ENCODE measurements at regions of chr11 and their contacts with region 1.

Region 1: GRCh38 chr11:65575568-65576231 is at the start of gene EHBP1L1:
- H3K4me3 ChIP-seq: peak within 1 kb of the TSS; percentile 31
- H3K27ac ChIP-seq: no peak within 1 kb of the TSS; the same call in 1 of the 2 replicates
- H3K4me1 ChIP-seq: peaks cover 17% of the 10 kb centered on the region; the same call in 1 of the 2 replicates
- CTCF ChIP-seq: no peak

Region 2: DNA sequence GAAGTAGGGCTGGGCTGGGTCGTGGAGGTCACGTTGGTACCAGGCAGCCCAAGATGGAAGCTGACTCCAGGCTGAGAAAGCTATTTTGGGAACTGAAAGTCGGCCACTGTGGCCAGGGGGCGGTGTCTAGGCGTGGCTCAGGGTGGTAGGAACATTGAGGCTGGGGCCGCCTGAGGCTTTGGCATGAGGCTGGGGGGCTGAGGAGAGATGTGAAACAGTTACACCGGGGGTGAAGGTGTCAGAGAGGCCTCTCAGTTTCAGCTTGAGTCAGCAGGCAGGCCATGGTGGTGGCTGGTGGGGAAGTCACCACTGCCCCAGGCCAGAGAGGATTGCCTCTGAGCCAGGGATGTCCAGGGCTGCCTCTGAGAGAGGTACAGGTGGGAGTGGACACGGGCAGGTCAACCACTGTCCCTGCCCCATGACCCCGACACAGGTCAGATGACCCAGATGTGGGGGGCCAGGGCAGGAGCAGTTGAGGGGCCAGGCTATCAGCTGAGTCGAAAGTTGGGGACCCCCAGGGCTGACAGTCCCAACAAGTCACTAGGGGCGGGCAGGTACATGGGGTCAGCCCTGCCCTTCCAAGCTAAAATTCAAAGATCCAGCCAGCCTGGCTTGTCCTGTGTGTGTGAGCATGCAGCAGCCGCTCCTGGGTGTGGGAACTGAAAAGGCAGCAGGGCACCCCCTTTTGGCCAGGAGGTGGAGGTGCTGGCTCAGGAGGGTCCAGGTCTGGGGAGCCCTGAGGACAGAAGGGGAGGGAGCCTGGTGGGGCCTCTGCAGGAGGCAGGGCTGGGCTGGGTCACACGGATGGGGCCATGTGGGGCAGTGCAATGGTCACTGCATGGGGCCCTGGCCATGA is 12.7 kb after region 1 on chr11:
- CTCF ChIA-PET with region 1: interaction called, 28 read pairs
- POLR2A ChIA-PET with region 1: interaction called, 6 read pairs
- H3K4me3 ChIP-seq: no peak overlapping the region
- H3K27ac ChIP-seq: no peak overlapping the region
- H3K4me1 ChIP-seq: no peaks in the 10 kb centered on the region
- CTCF ChIP-seq: peak; percentile 35; the same call in 1 of the 2 replicates

Region 3: DNA sequence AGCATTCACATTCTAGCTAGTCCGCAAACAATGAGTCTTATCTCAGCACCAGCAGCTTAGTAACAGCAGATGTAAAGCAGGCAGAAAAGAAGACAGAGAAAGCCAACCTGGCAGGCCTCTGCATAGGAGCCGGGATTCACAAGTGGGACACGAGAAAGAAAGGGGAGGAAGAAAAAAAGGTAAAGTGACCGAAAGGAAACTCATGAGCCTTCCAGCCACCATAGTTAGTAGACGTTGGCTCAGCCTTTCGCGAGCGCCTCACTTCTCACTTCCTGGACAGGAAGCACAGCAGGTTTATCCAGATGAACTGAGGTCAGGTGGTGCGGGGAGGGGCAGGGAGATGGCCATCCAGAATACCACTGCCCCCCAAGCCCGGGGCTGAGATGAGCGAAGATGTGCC is 116.7 kb after region 1 on chr11:
- CTCF ChIA-PET with region 1: no interaction called
- POLR2A ChIA-PET with region 1: no interaction called
- H3K4me3 ChIP-seq: no peak overlapping the region
- H3K27ac ChIP-seq: no peak overlapping the region
- H3K4me1 ChIP-seq: no peaks in the 10 kb centered on the region
- CTCF ChIP-seq: no peak

Region 4: GRCh38 chr11:66001942-66002647 is 426.4 kb after region 1 on chr11 and contains the starts of genes BANF1 and EIF1AD:
- CTCF ChIA-PET with region 1: no interaction called
- POLR2A ChIA-PET with region 1: no interaction called
- H3K4me3 ChIP-seq: peak within 1 kb of the TSS; percentile 98
- H3K27ac ChIP-seq: peak within 1 kb of the TSS; percentile 58
- H3K4me1 ChIP-seq: no peaks in the 10 kb centered on the region
- CTCF ChIP-seq: no peak